ENCODE measurements at regions of chr18 and their contacts with region 1.

Region 1: GRCh38 chr18:48007955-48008701 is 77.7 kb upstream of the SMAD2 start:
- DNase-seq: peak in 1 of 2 donors; percentile 72
- H3K4me3 ChIP-seq: peak overlapping the region; percentile 62 to 90
- H3K27ac ChIP-seq: peak overlapping the region; percentile 15 to 27
- H3K4me1 ChIP-seq: peaks cover 4 to 5% of the 10 kb centered on the region in 2 donors
- H3K27me3 ChIP-seq: no peaks in the 10 kb centered on the region
- CTCF ChIP-seq: peak; percentile 9 to 34 (median 23)

Region 2: GRCh38 chr18:47235096-47235495 is 773.0 kb before region 1 on chr18:
- intact Hi-C with region 1: no loop called
- DNase-seq: no peak
- H3K4me3 ChIP-seq: no peak overlapping the region
- H3K27ac ChIP-seq: no peak overlapping the region
- H3K4me1 ChIP-seq: no peaks in the 10 kb centered on the region
- H3K27me3 ChIP-seq: no peaks in the 10 kb centered on the region
- CTCF ChIP-seq: no peak

Region 3: GRCh38 chr18:47968006-47968676 is 40.0 kb before region 1 on chr18:
- intact Hi-C with region 1: loop called (anchors 5 kb)
- DNase-seq: no peak
- H3K4me3 ChIP-seq: no peak overlapping the region
- H3K27ac ChIP-seq: peak overlapping the region; percentile 53 to 84
- H3K4me1 ChIP-seq: peaks cover 0 to 13% of the 10 kb centered on the region in 2 donors
- H3K27me3 ChIP-seq: no peaks in the 10 kb centered on the region
- CTCF ChIP-seq: no peak

Region 4: DNA sequence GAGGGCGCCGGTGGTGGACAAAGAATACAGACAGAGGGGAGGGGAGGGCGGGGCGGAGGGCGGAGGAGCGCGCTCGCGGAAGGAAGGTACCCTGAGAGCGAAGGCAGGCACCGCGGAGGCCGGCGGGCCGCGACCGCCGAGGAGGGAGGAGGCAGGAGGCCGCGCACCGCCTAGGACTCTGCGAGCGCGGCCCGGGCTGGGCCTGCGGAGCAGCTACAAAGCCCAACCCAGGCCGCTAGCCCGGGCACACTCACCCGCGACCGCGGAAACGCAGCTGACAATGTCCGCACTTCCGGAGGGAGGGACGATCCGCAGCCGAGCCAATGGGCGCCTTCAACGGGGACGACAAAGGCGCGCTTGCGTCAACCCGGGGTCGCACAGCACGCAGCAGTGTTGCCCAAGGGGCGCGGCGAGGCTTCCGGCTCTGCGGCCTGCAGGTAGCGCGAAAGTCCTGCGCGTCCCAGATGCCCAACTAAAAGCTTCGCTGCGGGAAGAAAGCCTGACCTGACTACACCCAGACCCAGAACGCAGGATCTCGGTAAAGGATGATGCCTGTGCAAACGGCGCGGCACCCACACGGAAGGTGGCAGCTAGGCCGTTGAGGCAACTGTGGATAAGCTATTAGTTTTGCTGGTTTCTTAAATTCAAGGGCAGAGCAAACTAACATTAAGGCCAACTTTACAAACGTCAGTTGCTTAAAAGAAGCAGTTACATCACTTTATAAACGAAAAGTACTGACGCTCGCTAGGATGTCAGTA is 1479.0 kb after region 1 on chr18 and contains the start of gene C18orf32:
- intact Hi-C with region 1: loop called (anchors 10 kb)
- DNase-seq: peak; percentile 71 to 97
- H3K4me3 ChIP-seq: peak within 1 kb of the TSS; percentile 58 to 96
- H3K27ac ChIP-seq: peak within 1 kb of the TSS; percentile 93 to 98
- H3K4me1 ChIP-seq: peaks cover 4 to 13% of the 10 kb centered on the region in 2 donors
- H3K27me3 ChIP-seq: no peaks in the 10 kb centered on the region
- CTCF ChIP-seq: no peak
- total RNA-seq, gene C18orf32: 7.8 TPM

Measured in ascending aorta (tissue), 2 donors.